Activated CD8-positive, alpha-beta memory T cell treated with anti-CD3 and anti-CD28 coated beads, Interleukin-2, amount 10 ng/mL, durations not matched to agents 7 days and 5 days (primary cell): ENCODE measurements at regions of chr1 and their contacts with region 1.

Region 1: DNA sequence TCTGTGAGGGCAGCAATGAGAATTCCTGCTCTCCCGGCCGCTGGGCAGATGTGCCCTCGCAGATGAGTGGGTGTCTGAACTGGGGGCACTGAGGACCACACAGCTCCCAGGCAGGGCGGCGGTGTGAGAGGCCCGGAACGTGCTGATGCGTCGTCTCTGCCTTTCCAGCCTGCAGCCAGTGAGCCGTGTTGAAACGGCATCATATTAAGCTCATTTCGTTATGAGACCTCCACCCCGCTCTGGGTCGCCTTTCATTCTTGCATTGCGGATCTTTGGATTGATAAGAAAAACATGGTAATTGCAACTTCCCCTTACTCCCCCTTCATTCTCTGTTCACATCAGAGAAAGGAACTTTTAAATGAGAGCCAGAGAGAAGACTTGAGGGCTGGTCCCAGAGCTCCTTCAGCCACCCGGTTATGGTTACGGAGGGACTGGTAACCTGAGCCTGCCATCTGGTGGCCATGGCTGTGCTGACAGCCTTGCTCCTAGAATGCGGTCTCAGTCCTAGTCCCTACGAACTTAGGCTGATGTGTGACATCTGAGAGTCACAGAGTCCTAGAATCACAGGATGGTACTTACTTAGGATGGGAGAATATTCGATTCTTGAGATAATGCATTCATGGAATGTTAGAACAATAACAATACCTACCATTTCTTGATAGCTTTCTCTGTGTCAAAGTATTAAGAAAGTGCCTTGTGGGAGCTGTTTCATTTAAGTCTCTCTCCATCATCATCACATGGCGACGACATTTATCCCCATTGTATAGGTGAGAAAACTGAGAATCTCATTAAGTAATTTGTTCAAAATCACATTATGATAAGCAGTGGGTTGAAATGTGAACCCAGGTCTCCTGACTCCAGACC is 271.0 kb downstream of the TRABD2B start:
- DNase-seq: peak; percentile 77
- ATAC-seq: peak; percentile 92
- H3K4me3 Mint-ChIP-seq: no peak overlapping the region
- H3K27ac Mint-ChIP-seq: no peak overlapping the region
- H3K4me1 Mint-ChIP-seq: peaks cover 3% of the 10 kb centered on the region
- H3K27me3 Mint-ChIP-seq: peaks cover 53% of the 10 kb centered on the region

Region 2: DNA sequence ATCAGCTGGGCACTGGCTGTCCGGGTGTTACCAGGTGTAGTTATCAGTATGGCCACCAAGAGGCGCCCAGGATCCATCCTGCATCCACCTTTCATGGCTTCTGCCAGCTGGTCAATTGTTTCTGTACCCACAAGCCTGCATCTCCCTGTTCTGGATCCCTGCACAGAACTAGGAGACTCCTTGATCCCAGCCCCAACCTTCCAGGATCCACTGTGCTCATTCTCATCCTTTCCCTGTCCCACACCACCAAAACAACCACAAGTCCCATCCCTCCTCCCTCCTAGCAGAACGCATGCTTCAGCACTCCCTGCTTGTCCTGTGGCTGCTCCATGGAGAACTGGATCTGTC is 337.4 kb before region 1 on chr1:
- CTCF ChIA-PET with region 1: interaction called, 13 read pairs
- DNase-seq: peak; percentile 61
- ATAC-seq: peak; percentile 69
- H3K4me3 Mint-ChIP-seq: no peak overlapping the region
- H3K27ac Mint-ChIP-seq: no peak overlapping the region
- H3K4me1 Mint-ChIP-seq: no peaks in the 10 kb centered on the region
- H3K27me3 Mint-ChIP-seq: peaks cover 10% of the 10 kb centered on the region

Region 3: DNA sequence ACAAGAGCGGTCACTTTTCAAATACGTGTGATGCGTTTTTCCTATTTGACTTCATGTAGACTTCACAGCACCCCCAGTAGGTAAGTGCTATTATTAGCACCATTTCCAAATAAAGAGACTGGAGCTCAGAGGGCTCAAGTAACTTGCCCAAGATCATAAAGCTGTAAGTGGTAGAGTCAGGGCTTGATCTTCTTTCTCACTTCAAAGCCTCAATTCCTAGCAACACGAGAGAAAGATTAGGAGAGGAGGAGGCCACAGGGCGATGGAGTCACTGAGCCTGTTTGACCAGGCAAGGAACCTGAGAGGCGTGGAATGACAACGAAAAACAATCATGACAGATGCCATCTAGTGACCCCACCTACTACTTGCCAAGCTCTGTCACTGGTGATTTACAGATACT is 107.4 kb before region 1 on chr1:
- CTCF ChIA-PET with region 1: no interaction called
- DNase-seq: peak; percentile 15
- ATAC-seq: no peak
- H3K4me3 Mint-ChIP-seq: no peak overlapping the region
- H3K27ac Mint-ChIP-seq: no peak overlapping the region
- H3K4me1 Mint-ChIP-seq: no peaks in the 10 kb centered on the region
- H3K27me3 Mint-ChIP-seq: peaks cover 5% of the 10 kb centered on the region

Region 4: DNA sequence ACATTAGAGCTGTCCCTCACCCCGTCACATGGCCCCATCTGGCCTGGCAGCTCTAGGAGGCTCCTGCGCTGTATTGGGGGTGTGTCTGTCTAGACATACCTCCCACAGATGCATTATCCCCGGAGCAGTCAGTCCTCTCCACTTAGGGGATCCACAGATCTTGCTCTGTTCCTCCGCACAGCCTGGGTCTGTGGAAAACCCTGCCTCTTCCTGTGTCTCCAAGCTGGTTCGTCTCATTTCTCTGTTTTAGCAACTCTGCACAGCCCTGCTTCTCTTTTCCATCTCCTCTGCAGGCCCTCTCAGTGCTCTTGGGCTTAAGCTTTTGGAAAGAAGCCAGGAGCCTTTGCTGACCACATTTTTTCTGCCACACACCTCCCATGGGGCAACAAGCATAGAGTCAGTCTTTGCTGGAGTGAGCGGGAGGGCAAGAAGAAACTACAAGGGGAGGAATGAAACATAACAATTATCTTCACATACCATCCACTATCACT is 46.9 kb before region 1 on chr1:
- CTCF ChIA-PET with region 1: no interaction called
- DNase-seq: peak; percentile 16
- ATAC-seq: no peak
- H3K4me3 Mint-ChIP-seq: no peak overlapping the region
- H3K27ac Mint-ChIP-seq: no peak overlapping the region
- H3K4me1 Mint-ChIP-seq: no peaks in the 10 kb centered on the region
- H3K27me3 Mint-ChIP-seq: peaks cover 2% of the 10 kb centered on the region

Region 5: DNA sequence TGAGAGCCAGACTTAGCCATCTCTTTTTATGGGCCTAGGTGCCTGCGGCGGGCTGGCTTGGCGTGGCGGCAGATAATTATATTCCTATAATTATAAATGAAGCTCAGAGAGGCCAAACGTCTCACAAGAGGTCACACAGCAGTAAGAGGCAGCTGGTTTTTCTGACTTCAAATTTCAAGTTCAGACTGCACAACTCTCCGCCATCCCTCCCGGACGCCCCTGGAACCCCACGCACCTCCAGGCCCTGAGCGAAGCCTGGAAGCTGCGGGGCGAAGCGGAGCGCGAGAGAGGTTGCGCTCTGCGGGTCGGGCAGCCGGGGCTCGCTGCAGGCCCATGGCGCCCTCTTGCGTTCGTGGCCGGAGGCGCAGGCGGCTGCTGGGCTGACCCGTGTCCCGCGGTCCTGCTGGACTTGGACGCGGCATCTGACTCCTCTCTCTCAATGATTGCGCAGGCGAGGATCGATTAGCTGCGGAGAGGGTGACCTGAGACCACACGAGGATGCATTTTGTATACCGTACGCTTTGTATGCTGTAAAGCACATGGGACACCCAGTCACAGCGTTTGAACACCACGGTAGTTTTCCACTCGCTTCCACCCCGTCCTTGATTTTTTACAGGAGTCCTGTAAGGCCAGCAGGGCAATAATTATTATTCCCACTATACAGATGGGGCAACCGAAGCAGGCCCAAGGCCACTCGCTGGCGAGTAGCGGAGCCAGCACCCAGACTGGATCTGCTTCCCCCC is 15.7 kb before region 1 on chr1:
- CTCF ChIA-PET with region 1: interaction called, 26 read pairs
- DNase-seq: peak; percentile 70
- ATAC-seq: peak; percentile 82
- H3K4me3 Mint-ChIP-seq: no peak overlapping the region
- H3K27ac Mint-ChIP-seq: no peak overlapping the region
- H3K4me1 Mint-ChIP-seq: peaks cover 5% of the 10 kb centered on the region
- H3K27me3 Mint-ChIP-seq: peaks cover 80% of the 10 kb centered on the region